ENCODE measurements at regions of chr13 and their contacts with region 1.

Region 1: DNA sequence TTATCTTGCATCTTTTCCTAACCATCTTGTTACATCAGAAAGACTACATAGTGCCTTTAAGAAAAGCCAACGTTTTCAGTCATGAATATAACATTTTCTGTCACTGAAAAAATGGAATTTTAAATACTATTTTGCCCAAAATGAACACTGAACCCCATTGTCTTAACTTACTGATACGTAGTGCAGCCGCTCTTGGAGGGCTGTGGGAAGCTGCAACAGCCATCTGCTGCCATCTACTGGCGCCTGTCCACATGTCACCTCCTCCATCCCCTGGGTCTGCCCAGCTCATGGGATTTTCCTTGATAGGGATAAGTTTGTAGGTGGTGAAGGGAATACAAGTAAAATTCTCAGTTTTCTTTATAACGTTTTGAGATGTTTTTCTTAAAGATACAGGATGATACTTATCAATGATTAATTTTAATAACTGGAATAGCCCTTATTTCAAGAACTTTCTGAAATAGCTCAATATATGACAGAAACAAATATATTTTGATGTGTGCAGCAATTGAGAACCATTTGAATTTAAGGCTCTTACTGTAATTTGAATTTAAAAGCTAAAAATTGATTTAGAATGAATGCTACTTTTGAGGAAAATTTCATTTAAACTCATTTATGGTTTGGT is 73.7 kb downstream of the GGACT start:
- DNase-seq: peak; percentile 48
- H3K4me3 ChIP-seq: no peak overlapping the region
- H3K27ac ChIP-seq: no peak overlapping the region
- H3K4me1 ChIP-seq: no peaks in the 10 kb centered on the region
- H3K27me3 ChIP-seq: no peaks in the 10 kb centered on the region
- CTCF ChIP-seq: peak; percentile 94 to 97

Region 2: GRCh38 chr13:99900960-99901359 is 613.9 kb before region 1 on chr13:
- CTCF ChIA-PET with region 1: no interaction called
- dilution Hi-C with region 1: loop called (anchors 25 kb)
- in situ Hi-C with region 1: loop called in 1 of 2 experiments (anchors 25 kb)
- intact Hi-C with region 1: loop called (anchors 1 kb)
- DNase-seq: no peak
- H3K4me3 ChIP-seq: no peak overlapping the region
- H3K27ac ChIP-seq: no peak overlapping the region
- H3K4me1 ChIP-seq: no peaks in the 10 kb centered on the region
- H3K27me3 ChIP-seq: peaks cover 11% of the 10 kb centered on the region
- CTCF ChIP-seq: no peak

Region 3: DNA sequence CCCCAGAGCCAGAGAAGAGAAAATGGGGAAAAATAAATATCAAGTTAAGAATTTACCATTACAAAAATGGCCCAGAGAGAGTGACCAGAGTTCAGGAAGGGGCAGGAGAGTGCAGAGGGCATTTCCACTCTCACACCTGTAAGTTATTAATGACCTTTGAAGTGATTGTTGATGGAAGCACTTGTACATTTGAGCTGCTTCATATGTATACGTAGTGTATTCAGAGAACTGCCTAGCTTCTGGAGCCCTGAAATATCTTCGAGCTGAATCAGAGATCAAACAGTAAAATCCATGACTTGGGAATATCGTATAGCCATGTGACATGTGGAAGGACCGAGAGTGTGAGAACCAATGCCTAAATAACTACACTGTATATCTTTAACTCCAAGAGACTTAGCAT is 475.2 kb before region 1 on chr13:
- CTCF ChIA-PET with region 1: no interaction called
- dilution Hi-C with region 1: no loop called
- in situ Hi-C with region 1: no loop called
- intact Hi-C with region 1: loop called (anchors 1 kb)
- DNase-seq: no peak
- H3K4me3 ChIP-seq: no peak overlapping the region
- H3K27ac ChIP-seq: no peak overlapping the region
- H3K4me1 ChIP-seq: no peaks in the 10 kb centered on the region
- H3K27me3 ChIP-seq: no peaks in the 10 kb centered on the region
- CTCF ChIP-seq: no peak

Region 4: GRCh38 chr13:100088644-100089464 is 426.0 kb before region 1 on chr13 and contains the start of gene PCCA:
- CTCF ChIA-PET with region 1: interaction called, 27 read pairs
- dilution Hi-C with region 1: no loop called
- in situ Hi-C with region 1: no loop called
- intact Hi-C with region 1: no loop called
- DNase-seq: peak; percentile 91
- H3K4me3 ChIP-seq: peak within 1 kb of the TSS; percentile 65 to 94 (median 84)
- H3K27ac ChIP-seq: peak within 1 kb of the TSS; percentile 50
- H3K4me1 ChIP-seq: peaks cover 20% of the 10 kb centered on the region
- H3K27me3 ChIP-seq: no peaks in the 10 kb centered on the region
- CTCF ChIP-seq: no peak
- total RNA-seq, gene PCCA: 16.9 to 31.5 TPM

Region 5: GRCh38 chr13:100244431-100244830 is 270.5 kb before region 1 on chr13:
- CTCF ChIA-PET with region 1: no interaction called
- dilution Hi-C with region 1: no loop called
- in situ Hi-C with region 1: loop called in 1 of 2 experiments (anchors 25 kb)
- intact Hi-C with region 1: loop called (anchors 2 kb)
- DNase-seq: no peak
- H3K4me3 ChIP-seq: no peak overlapping the region
- H3K27ac ChIP-seq: no peak overlapping the region
- H3K4me1 ChIP-seq: no peaks in the 10 kb centered on the region
- H3K27me3 ChIP-seq: no peaks in the 10 kb centered on the region
- CTCF ChIP-seq: no peak

Measured in mammary epithelial cell (primary cell).